ENCODE measurements at regions of chr1 and their contacts with region 1.

Region 1: GRCh38 chr1:93814059-93814794 is 64.8 kb downstream of the DNTTIP2 start:
- DNase-seq: peak; percentile 40 to 70
- ATAC-seq: peak; percentile 60 to 69 (median 60)
- H3K4me3 ChIP-seq: no peak overlapping the region
- H3K4me3 Mint-ChIP-seq: no peak overlapping the region
- H3K27ac ChIP-seq: no peak overlapping the region
- H3K27ac Mint-ChIP-seq: no peak overlapping the region
- H3K4me1 ChIP-seq: peaks cover 16% of the 10 kb centered on the region
- H3K4me1 Mint-ChIP-seq: peaks cover 22 to 23% of the 10 kb centered on the region in 2 donors
- H3K27me3 ChIP-seq: no peaks in the 10 kb centered on the region
- H3K27me3 Mint-ChIP-seq: no peaks in the 10 kb centered on the region
- CTCF ChIP-seq: peak; percentile 93

Region 2: DNA sequence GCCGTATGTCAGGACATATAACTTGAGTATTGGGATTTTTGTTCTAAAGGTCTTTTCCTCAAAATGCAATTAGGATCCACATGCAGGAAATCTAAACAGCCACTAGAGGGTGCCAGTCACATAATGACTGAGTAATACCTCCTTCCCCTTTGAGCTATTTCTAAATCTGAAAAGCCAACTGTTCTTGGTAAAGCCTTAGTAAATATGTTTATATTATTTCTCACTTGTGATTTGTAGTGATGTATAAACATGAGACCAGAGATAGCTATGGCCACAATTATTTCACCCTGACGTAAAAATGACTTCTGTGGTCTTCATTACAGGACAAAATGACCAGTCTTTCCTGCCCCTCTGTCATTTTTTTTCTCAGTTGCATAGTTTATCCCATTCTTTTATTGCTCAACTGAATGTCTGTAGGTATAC is 509.5 kb before region 1 on chr1:
- intact Hi-C with region 1: loop called (anchors 2 kb)
- DNase-seq: peak in 1 of 2 donors; percentile 83
- ATAC-seq: peak; percentile 70 to 80 (median 77)
- H3K4me3 ChIP-seq: no peak overlapping the region
- H3K4me3 Mint-ChIP-seq: no peak overlapping the region
- H3K27ac ChIP-seq: no peak overlapping the region
- H3K27ac Mint-ChIP-seq: no peak overlapping the region
- H3K4me1 ChIP-seq: no peaks in the 10 kb centered on the region
- H3K4me1 Mint-ChIP-seq: no peaks in the 10 kb centered on the region
- H3K27me3 ChIP-seq: no peaks in the 10 kb centered on the region
- H3K27me3 Mint-ChIP-seq: no peaks in the 10 kb centered on the region
- CTCF ChIP-seq: peak; percentile 95

Region 3: GRCh38 chr1:93629099-93630059 is 184.8 kb before region 1 on chr1:
- intact Hi-C with region 1: loop called (anchors 1 kb)
- DNase-seq: peak in 1 of 2 donors; percentile 81
- ATAC-seq: peak; percentile 76 to 94 (median 91)
- H3K4me3 ChIP-seq: no peak overlapping the region
- H3K4me3 Mint-ChIP-seq: no peak overlapping the region
- H3K27ac ChIP-seq: no peak overlapping the region
- H3K27ac Mint-ChIP-seq: no peak overlapping the region
- H3K4me1 ChIP-seq: no peaks in the 10 kb centered on the region
- H3K4me1 Mint-ChIP-seq: no peaks in the 10 kb centered on the region
- H3K27me3 ChIP-seq: no peaks in the 10 kb centered on the region
- H3K27me3 Mint-ChIP-seq: peaks cover 0 to 7% of the 10 kb centered on the region in 2 donors
- CTCF ChIP-seq: peak; percentile 83

Region 4: DNA sequence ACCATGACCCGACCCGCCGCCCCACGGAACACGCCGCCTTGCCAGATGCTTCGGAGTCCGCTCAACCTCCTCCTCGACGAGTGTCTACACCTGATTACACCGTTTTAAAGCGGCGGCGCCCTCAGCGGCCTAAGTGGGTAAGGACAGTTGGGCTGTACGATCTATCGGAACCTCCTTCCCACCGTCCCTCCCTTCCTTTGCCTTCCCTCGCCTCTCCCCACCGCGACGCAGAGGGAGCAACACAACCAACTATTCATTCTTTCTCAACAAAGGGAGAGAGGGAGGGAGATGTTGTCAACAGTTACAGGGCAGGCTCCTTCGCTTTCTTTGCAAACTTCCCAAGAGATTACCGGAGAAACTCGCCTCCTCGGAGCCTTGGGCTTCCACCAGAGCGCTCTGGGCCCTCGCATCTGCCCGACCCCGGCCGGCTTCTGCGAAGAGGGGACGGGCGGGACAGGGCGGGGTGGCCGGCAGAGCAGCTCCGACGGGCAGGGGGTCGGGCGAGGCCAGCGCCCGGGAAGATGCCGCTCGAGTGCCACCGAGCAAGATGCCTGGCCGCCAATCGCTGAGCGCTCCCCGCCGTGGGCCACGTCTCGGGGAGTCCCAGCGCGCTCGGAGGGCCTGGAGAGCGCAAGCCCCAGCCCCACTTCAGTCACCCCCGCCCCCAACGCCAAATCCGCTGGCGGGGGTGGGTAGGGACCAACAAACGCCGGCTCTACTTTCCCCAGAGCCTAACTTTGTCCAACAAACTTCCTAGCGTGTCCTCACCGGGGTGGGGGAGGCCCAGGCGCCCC is 133.3 kb before region 1 on chr1:
- intact Hi-C with region 1: loop called (anchors 2 kb)
- DNase-seq: peak; percentile 33 to 37
- ATAC-seq: peak; percentile 68 to 82 (median 78)
- H3K4me3 ChIP-seq: peak overlapping the region; percentile 56
- H3K4me3 Mint-ChIP-seq: peak overlapping the region; percentile 89
- H3K27ac ChIP-seq: no peak overlapping the region
- H3K27ac Mint-ChIP-seq: peak overlapping the region in 1 of 2 donors; percentile 27
- H3K4me1 ChIP-seq: peaks cover 13% of the 10 kb centered on the region
- H3K4me1 Mint-ChIP-seq: peaks cover 6 to 13% of the 10 kb centered on the region in 2 donors
- H3K27me3 ChIP-seq: peaks cover 5% of the 10 kb centered on the region
- H3K27me3 Mint-ChIP-seq: peaks cover 12 to 30% of the 10 kb centered on the region in 2 donors
- CTCF ChIP-seq: peak; percentile 35

Region 5: GRCh38 chr1:93758842-93759515 is 55.2 kb before region 1 on chr1:
- intact Hi-C with region 1: loop called (anchors 5 kb)
- DNase-seq: peak; percentile 55 to 62
- ATAC-seq: peak; percentile 80 to 89 (median 85)
- H3K4me3 ChIP-seq: no peak overlapping the region
- H3K4me3 Mint-ChIP-seq: peak overlapping the region; percentile 80
- H3K27ac ChIP-seq: peak overlapping the region; percentile 83
- H3K27ac Mint-ChIP-seq: peak overlapping the region; percentile 93 to 97
- H3K4me1 ChIP-seq: peaks cover 59% of the 10 kb centered on the region
- H3K4me1 Mint-ChIP-seq: peaks cover 65 to 71% of the 10 kb centered on the region in 2 donors
- H3K27me3 ChIP-seq: no peaks in the 10 kb centered on the region
- H3K27me3 Mint-ChIP-seq: peaks cover 0 to 5% of the 10 kb centered on the region in 2 donors
- CTCF ChIP-seq: no peak

Region 6: GRCh38 chr1:93779540-93780192 is 34.6 kb before region 1 on chr1:
- intact Hi-C with region 1: no loop called
- DNase-seq: no peak
- ATAC-seq: no peak
- H3K4me3 ChIP-seq: no peak overlapping the region
- H3K4me3 Mint-ChIP-seq: no peak overlapping the region
- H3K27ac ChIP-seq: no peak overlapping the region
- H3K27ac Mint-ChIP-seq: no peak overlapping the region
- H3K4me1 ChIP-seq: no peaks in the 10 kb centered on the region
- H3K4me1 Mint-ChIP-seq: peaks cover 0 to 2% of the 10 kb centered on the region in 2 donors
- H3K27me3 ChIP-seq: no peaks in the 10 kb centered on the region
- H3K27me3 Mint-ChIP-seq: no peaks in the 10 kb centered on the region
- CTCF ChIP-seq: no peak

Region 7: GRCh38 chr1:93878889-93879586 is 64.8 kb after region 1 on chr1 and contains the start of gene DNTTIP2:
- intact Hi-C with region 1: loop called (anchors 2 kb)
- DNase-seq: peak; percentile 85 to 93
- ATAC-seq: peak; percentile 73 to 86 (median 84)
- H3K4me3 ChIP-seq: peak within 1 kb of the TSS; percentile 81
- H3K4me3 Mint-ChIP-seq: peak within 1 kb of the TSS; percentile 94
- H3K27ac ChIP-seq: peak within 1 kb of the TSS; percentile 94
- H3K27ac Mint-ChIP-seq: peak within 1 kb of the TSS; percentile 95 to 99
- H3K4me1 ChIP-seq: peaks cover 10% of the 10 kb centered on the region
- H3K4me1 Mint-ChIP-seq: peaks cover 42 to 45% of the 10 kb centered on the region in 2 donors
- H3K27me3 ChIP-seq: no peaks in the 10 kb centered on the region
- H3K27me3 Mint-ChIP-seq: no peaks in the 10 kb centered on the region
- CTCF ChIP-seq: no peak
- total RNA-seq, gene DNTTIP2: 88.5 to 104 (median 97.3) TPM

Measured in natural killer cell (primary cell).